Right cardiac atrium (tissue), 5 donors: ENCODE measurements at regions of chr3 and their contacts with region 1.

Region 1: GRCh38 chr3:186108941-186109865 is at the start of gene ETV5:
- DNase-seq: peak; percentile 99
- ATAC-seq: peak; percentile 99
- H3K4me3 ChIP-seq: peak within 1 kb of the TSS; percentile 76
- H3K27ac ChIP-seq: peak within 1 kb of the TSS; percentile 93
- H3K4me1 ChIP-seq: peaks cover 6% of the 10 kb centered on the region
- H3K27me3 ChIP-seq: no peaks in the 10 kb centered on the region
- total RNA-seq, gene ETV5: 6.1 to 35.1 (median 7.3) TPM

Region 2: GRCh38 chr3:185582866-185583265 is 526.3 kb before region 1 on chr3:
- intact Hi-C with region 1: no loop called
- DNase-seq: no peak
- ATAC-seq: no peak
- H3K4me3 ChIP-seq: no peak overlapping the region
- H3K27ac ChIP-seq: no peak overlapping the region
- H3K4me1 ChIP-seq: no peaks in the 10 kb centered on the region
- H3K27me3 ChIP-seq: no peaks in the 10 kb centered on the region

Region 3: GRCh38 chr3:186220911-186221645 is 111.9 kb after region 1 on chr3:
- intact Hi-C with region 1: loop called in 1 of 4 experiments (anchors 10 kb)
- DNase-seq: peak in 1 of 3 donors; percentile 62
- ATAC-seq: peak; percentile 36 to 58
- H3K4me3 ChIP-seq: no peak overlapping the region
- H3K27ac ChIP-seq: peak overlapping the region; percentile 49
- H3K4me1 ChIP-seq: no peaks in the 10 kb centered on the region
- H3K27me3 ChIP-seq: no peaks in the 10 kb centered on the region